Activated B cell treated with CpG ODN at 0.5 μM for 24 hours (primary cell): ENCODE measurements at regions of chr12 and their contacts with region 1.

Region 1: GRCh38 chr12:75480469-75480949 is at the start of gene GLIPR1:
- DNase-seq: peak; percentile 40
- ATAC-seq: peak; percentile 79
- H3K4me3 Mint-ChIP-seq: peak within 1 kb of the TSS; percentile 96
- H3K27ac Mint-ChIP-seq: peak within 1 kb of the TSS; percentile 97
- H3K4me1 Mint-ChIP-seq: peaks cover 96% of the 10 kb centered on the region
- H3K27me3 Mint-ChIP-seq: no peaks in the 10 kb centered on the region
- CTCF ChIP-seq: no peak
- total RNA-seq, gene GLIPR1: 44.7 and 45.4 TPM in 2 replicates

Region 2: GRCh38 chr12:75334384-75335030 is 146.0 kb before region 1 on chr12 and contains the start of gene GLIPR1L1:
- CTCF ChIA-PET with region 1: interaction called, 11 read pairs
- POLR2A ChIA-PET with region 1: interaction called, 3 read pairs
- intact Hi-C with region 1: loop called (anchors 1 kb)
- DNase-seq: peak; percentile 46
- ATAC-seq: peak; percentile 75
- H3K4me3 Mint-ChIP-seq: peak within 1 kb of the TSS; percentile 60
- H3K27ac Mint-ChIP-seq: no peak within 1 kb of the TSS
- H3K4me1 Mint-ChIP-seq: peaks cover 16% of the 10 kb centered on the region
- H3K27me3 Mint-ChIP-seq: peaks cover 23% of the 10 kb centered on the region
- CTCF ChIP-seq: peak; percentile 87
- total RNA-seq, gene GLIPR1L1: not detected in 2 replicates

Region 3: DNA sequence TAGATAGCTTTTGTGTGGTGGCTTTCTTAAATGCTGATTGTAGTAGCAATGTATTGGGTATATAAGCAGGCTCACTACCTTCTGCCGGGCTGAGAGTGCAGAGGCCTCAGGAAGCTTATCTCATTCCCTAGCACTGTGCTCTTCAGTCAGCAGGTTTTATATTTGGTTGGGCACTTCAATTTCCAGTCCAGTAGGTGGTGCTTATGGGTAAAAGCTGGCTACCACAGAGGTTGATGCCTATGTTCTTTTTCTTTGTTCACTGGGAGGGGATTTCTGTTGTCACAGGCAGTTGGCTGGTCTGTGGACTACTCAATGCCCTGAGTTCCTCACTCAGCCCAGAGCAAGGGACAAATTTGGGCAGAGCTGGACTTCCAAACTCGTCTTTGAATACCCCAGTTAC is 42.9 kb before region 1 on chr12:
- CTCF ChIA-PET with region 1: interaction called, 40 read pairs
- POLR2A ChIA-PET with region 1: interaction called, 6 read pairs
- intact Hi-C with region 1: loop called (anchors 2 kb)
- DNase-seq: no peak
- ATAC-seq: peak; percentile 72
- H3K4me3 Mint-ChIP-seq: no peak overlapping the region
- H3K27ac Mint-ChIP-seq: no peak overlapping the region
- H3K4me1 Mint-ChIP-seq: peaks cover 3% of the 10 kb centered on the region
- H3K27me3 Mint-ChIP-seq: peaks cover 10% of the 10 kb centered on the region
- CTCF ChIP-seq: no peak

Region 4: GRCh38 chr12:75505706-75506312 is 25.3 kb after region 1 on chr12:
- CTCF ChIA-PET with region 1: interaction called, 15 read pairs
- POLR2A ChIA-PET with region 1: interaction called, 41 read pairs
- intact Hi-C with region 1: loop called (anchors 1 kb)
- DNase-seq: no peak
- ATAC-seq: peak; percentile 45
- H3K4me3 Mint-ChIP-seq: no peak overlapping the region
- H3K27ac Mint-ChIP-seq: no peak overlapping the region
- H3K4me1 Mint-ChIP-seq: peaks cover 17% of the 10 kb centered on the region
- H3K27me3 Mint-ChIP-seq: no peaks in the 10 kb centered on the region
- CTCF ChIP-seq: no peak

Region 5: GRCh38 chr12:75511116-75512048 is 30.9 kb after region 1 on chr12 and contains the start of gene KRR1:
- CTCF ChIA-PET with region 1: interaction called, 5 read pairs
- POLR2A ChIA-PET with region 1: interaction called, 41 read pairs
- intact Hi-C with region 1: loop called (anchors 1 kb)
- DNase-seq: peak; percentile 72
- ATAC-seq: peak; percentile 96
- H3K4me3 Mint-ChIP-seq: peak within 1 kb of the TSS; percentile 99
- H3K27ac Mint-ChIP-seq: peak within 1 kb of the TSS; percentile 99
- H3K4me1 Mint-ChIP-seq: peaks cover 27% of the 10 kb centered on the region
- H3K27me3 Mint-ChIP-seq: no peaks in the 10 kb centered on the region
- CTCF ChIP-seq: no peak
- total RNA-seq, gene KRR1: 75.0 and 85.1 TPM in 2 replicates

Region 6: DNA sequence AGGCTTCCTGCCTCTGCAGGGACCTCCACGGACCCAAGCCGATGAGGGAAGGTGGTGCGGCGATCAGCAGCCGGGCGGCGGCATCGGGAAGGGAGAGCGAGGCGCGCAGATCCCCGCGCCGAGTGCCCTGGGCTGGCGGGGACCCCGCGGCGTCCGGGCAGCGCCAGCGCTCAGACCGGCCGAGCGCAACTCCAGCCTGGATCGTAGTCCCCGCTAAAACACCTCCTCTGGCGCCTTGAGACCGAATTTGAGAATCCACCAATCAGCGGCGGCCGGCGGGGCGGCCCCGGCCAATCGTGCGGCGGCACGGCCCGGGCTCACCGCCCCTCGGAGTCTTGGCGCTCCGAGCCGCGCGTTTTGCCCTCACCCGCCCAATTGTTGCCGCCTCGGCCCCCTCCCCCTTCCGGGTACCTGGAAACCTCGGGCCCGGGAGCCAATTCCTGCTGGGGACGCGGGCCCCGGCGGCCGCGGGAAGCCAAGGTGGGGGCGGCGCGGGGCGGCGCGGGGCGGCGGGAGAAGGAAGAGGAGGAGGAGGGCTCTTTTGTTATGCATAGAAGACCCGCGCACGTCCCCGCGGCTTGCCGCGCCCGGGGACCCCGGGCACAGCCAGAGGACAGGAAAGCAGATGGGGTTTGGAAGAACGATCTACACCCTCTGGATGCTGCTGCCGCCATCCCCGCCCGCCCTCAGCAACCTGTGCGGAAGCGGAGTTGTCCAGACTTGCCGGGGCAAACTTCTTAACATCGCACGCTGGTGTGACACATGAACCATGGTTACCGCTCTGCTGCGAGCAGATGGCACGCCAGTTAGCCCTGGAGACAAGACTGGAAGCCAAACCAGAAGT is 1585.1 kb after region 1 on chr12 and contains the start of gene E2F7:
- CTCF ChIA-PET with region 1: no interaction called
- POLR2A ChIA-PET with region 1: no interaction called
- intact Hi-C with region 1: loop called (anchors 5 kb)
- DNase-seq: peak; percentile 81
- ATAC-seq: peak; percentile 86
- H3K4me3 Mint-ChIP-seq: peak within 1 kb of the TSS; percentile 90
- H3K27ac Mint-ChIP-seq: no peak within 1 kb of the TSS
- H3K4me1 Mint-ChIP-seq: peaks cover 36% of the 10 kb centered on the region
- H3K27me3 Mint-ChIP-seq: peaks cover 5% of the 10 kb centered on the region
- CTCF ChIP-seq: no peak
- total RNA-seq, gene E2F7: 0.71 and 0.95 TPM in 2 replicates